Activated CD4-positive, alpha-beta T cell treated with anti-CD3 and anti-CD28 coated beads for 36 hours (primary cell): ENCODE measurements at regions of chrX and their contacts with region 1.

Region 1: GRCh38 chrX:109485470-109486340 is 3.8 kb upstream of the GUCY2F start:
- DNase-seq: peak; percentile 68
- ATAC-seq: peak; percentile 36
- H3K4me3 Mint-ChIP-seq: no peak overlapping the region
- H3K27ac Mint-ChIP-seq: no peak overlapping the region
- H3K4me1 Mint-ChIP-seq: no peaks in the 10 kb centered on the region
- H3K27me3 Mint-ChIP-seq: peaks cover 2% of the 10 kb centered on the region

Region 2: DNA sequence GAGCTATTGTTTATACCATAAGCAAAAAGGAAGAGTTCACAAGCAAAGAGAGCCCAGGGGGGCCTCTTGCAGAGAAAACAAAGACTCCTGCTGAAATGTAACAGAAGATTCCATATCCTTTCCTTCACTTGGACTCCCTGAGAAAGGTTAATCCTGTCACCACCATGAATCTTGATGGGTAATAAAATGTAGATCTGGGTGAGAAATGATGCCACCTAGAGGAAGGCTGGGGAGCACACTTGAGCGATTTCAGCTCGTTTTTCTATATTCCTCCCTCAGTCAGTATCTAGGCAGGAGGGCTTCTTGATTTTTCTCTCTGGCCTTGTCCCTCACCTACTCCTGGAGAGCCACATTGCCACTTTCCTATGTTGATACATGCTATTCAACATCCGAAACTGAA is 149.5 kb after region 1 on chrX:
- CTCF ChIA-PET with region 1: interaction called, 23 read pairs
- POLR2A ChIA-PET with region 1: no interaction called
- intact Hi-C with region 1: loop called (anchors 1 to 5 kb)
- DNase-seq: peak; percentile 6
- ATAC-seq: no peak
- H3K4me3 Mint-ChIP-seq: no peak overlapping the region
- H3K27ac Mint-ChIP-seq: no peak overlapping the region
- H3K4me1 Mint-ChIP-seq: no peaks in the 10 kb centered on the region
- H3K27me3 Mint-ChIP-seq: no peaks in the 10 kb centered on the region